ENCODE measurements at regions of chr12 and their contacts with region 1.

Region 1: GRCh38 chr12:62731055-62731820 is 203.7 kb downstream of the PPM1H start:
- DNase-seq: no peak
- ATAC-seq: peak; percentile 79
- H3K4me3 ChIP-seq: no peak overlapping the region
- H3K27ac ChIP-seq: no peak overlapping the region
- H3K4me1 ChIP-seq: peaks cover 9% of the 10 kb centered on the region
- H3K27me3 ChIP-seq: no peaks in the 10 kb centered on the region
- CTCF ChIP-seq: no peak
- EP300 ChIP-seq: no peak
- POLR2A ChIP-seq: no peak
- RAD21 ChIP-seq: no peak

Region 2: GRCh38 chr12:62640910-62641448 is 90.3 kb before region 1 on chr12:
- CTCF ChIA-PET with region 1: no interaction called
- POLR2A ChIA-PET with region 1: no interaction called
- RAD21 ChIA-PET with region 1: no interaction called
- SMC1A ChIA-PET with region 1: no interaction called
- in situ Hi-C with region 1: no loop called
- intact Hi-C with region 1: loop called (anchors 5 kb)
- DNase-seq: peak; percentile 27
- ATAC-seq: peak; percentile 95
- H3K4me3 ChIP-seq: peak overlapping the region; percentile 4; the same call in 1 of the 2 replicates
- H3K27ac ChIP-seq: no peak overlapping the region
- H3K4me1 ChIP-seq: peaks cover 6% of the 10 kb centered on the region; the same call in 1 of the 2 replicates
- H3K27me3 ChIP-seq: no peaks in the 10 kb centered on the region
- CTCF ChIP-seq: no peak
- EP300 ChIP-seq: 0 out of 4 replicates have a peak, but pooled peaks of 1 of the 2 experiments have one; percentile 21
- POLR2A ChIP-seq: no peak
- RAD21 ChIP-seq: peak; percentile 26; the same call in 1 of the 2 replicates

Measured in GM12878 (cell line).